K562 (cell line): ENCODE measurements at regions of chr22 and their contacts with region 1.

Region 1: GRCh38 chr22:36123673-36124630 is 36.6 kb downstream of the APOL3 start:
- DNase-seq: peak; percentile 80 to 93 (median 88)
- ATAC-seq: peak; percentile 98
- H3K4me3 ChIP-seq: no peak overlapping the region
- H3K27ac ChIP-seq: peak overlapping the region; percentile 73
- H3K4me1 ChIP-seq: peaks cover 2 to 9% of the 10 kb centered on the region in 2 experiments; a peak in 4 of 5 replicates
- H3K27me3 ChIP-seq: peaks cover 0 to 14% of the 10 kb centered on the region in 2 experiments; a peak in 2 of 5 replicates
- CTCF ChIP-seq: peak; percentile 93 to 96 (median 94)
- EP300 ChIP-seq: no peak
- POLR2A ChIP-seq: no peak
- RAD21 ChIP-seq: peak; percentile 97 to 98

Region 2: GRCh38 chr22:35350539-35351503 is 773.1 kb before region 1 on chr22:
- CTCF ChIA-PET with region 1: no interaction called
- POLR2A ChIA-PET with region 1: no interaction called
- in situ Hi-C with region 1: loop called (anchors 10 kb)
- intact Hi-C with region 1: loop called (anchors 5 kb)
- DNase-seq: peak; percentile 87 to 94 (median 92)
- ATAC-seq: peak; percentile 99
- H3K4me3 ChIP-seq: peak overlapping the region; percentile 45
- H3K27ac ChIP-seq: no peak overlapping the region
- H3K4me1 ChIP-seq: peaks cover 5 to 23% of the 10 kb centered on the region in 2 experiments; a peak in 4 of 5 replicates
- H3K27me3 ChIP-seq: no peaks in the 10 kb centered on the region
- CTCF ChIP-seq: peak; percentile 76 to 82 (median 79)
- EP300 ChIP-seq: no peak
- POLR2A ChIP-seq: no peak
- RAD21 ChIP-seq: peak; percentile 85 to 87

Region 3: DNA sequence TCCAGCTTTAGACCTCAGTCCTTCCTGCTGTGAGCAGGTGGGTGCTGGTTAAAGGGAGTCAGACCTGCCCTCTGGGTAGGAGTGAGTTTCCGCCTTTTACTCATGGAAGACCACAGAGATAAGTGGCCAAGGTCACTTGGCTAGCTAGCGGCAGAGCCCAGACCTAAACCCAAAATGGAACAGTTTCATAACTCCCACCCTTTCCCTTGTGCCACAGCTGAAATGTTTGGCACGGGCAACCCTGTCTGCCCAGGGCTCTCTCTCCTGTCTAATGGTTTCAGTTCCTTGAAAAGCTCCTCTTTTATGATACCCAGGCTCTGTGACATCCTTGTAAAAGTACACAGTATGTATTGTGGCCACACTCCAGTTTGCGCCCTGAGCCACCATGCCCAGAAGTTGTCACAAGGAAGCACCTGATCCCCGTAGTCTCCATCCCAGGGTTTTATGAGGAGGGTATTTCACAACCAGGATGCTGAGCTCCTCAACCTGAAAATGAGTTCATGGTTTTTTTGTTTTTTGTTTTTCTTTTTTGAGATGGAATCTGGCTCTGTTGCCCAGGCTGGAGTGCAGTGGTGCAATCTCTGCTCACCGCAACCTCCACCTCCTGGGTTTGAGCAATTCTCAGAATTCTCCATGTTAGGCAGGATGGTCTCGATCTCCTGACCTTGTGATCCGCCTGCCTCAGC is 511.9 kb before region 1 on chr22:
- CTCF ChIA-PET with region 1: no interaction called
- POLR2A ChIA-PET with region 1: no interaction called
- in situ Hi-C with region 1: loop called (anchors 10 kb)
- intact Hi-C with region 1: no loop called
- DNase-seq: no peak
- ATAC-seq: no peak
- H3K4me3 ChIP-seq: no peak overlapping the region
- H3K27ac ChIP-seq: no peak overlapping the region
- H3K4me1 ChIP-seq: peaks cover 0 to 7% of the 10 kb centered on the region in 2 experiments; a peak in 3 of 5 replicates
- H3K27me3 ChIP-seq: peaks cover 0 to 22% of the 10 kb centered on the region in 2 experiments; a peak in 2 of 5 replicates
- CTCF ChIP-seq: no peak
- EP300 ChIP-seq: no peak
- POLR2A ChIP-seq: no peak
- RAD21 ChIP-seq: no peak

Region 4: DNA sequence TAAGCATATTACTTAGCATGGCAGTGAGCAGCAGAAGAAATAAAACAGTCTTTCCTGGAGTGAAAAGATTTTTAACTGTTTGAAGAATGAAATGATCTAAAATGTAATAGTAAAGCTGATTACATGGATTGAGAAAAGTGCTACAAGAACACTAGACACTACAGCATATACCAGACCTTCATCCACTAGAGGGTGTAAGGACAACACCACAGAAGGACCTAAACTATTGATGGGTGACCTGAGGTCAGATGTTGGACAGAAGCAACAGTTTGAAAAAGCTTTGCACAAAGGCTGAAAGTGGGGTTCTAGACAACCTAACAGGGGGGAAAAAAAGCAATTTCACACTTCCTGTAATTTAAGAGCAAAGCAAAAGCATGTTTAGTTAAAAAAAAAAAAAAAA is 193.0 kb before region 1 on chr22:
- CTCF ChIA-PET with region 1: interaction called, 12 read pairs
- POLR2A ChIA-PET with region 1: interaction called, 3 read pairs
- in situ Hi-C with region 1: loop called (anchors 5 kb)
- intact Hi-C with region 1: loop called (anchors 1 kb)
- DNase-seq: peak; percentile 19 to 64 (median 34)
- ATAC-seq: peak; percentile 93
- H3K4me3 ChIP-seq: no peak overlapping the region
- H3K27ac ChIP-seq: no peak overlapping the region
- H3K4me1 ChIP-seq: peaks cover 0 to 6% of the 10 kb centered on the region in 2 experiments; a peak in 1 of 5 replicates
- H3K27me3 ChIP-seq: no peaks in the 10 kb centered on the region
- CTCF ChIP-seq: peak; percentile 41 to 68 (median 51); a peak in 4 of 6 replicates
- EP300 ChIP-seq: no peak
- POLR2A ChIP-seq: no peak
- RAD21 ChIP-seq: peak; percentile 77 to 88